PC-3 (cell line): ENCODE measurements at regions of chr14 and their contacts with region 1.

Region 1: DNA sequence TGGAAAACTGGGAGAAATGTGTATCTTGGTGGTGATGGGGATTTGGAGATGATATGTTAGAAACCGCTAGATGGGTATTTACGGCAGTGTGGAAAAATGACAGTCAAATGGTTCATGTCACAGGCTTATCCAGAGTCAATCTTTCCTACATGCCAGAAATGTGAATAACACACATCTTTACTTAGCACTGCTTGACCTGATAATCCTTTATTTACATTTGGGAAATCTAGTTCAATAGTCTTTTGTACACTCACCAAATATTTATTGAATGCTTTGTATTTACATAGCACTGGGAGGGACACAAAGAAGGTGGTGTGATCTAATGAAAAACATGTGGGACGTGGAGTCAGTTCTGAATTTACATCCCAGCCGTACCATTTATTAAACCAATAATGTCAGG is 208.2 kb downstream of the DIO2 start:
- DNase-seq: peak; percentile 89
- ATAC-seq: peak; percentile 90
- H3K4me3 ChIP-seq: no peak overlapping the region; the same call in 1 of the 2 replicates
- H3K27ac ChIP-seq: peak overlapping the region; percentile 73
- H3K4me1 ChIP-seq: peaks cover 19% of the 10 kb centered on the region
- H3K27me3 ChIP-seq: no peaks in the 10 kb centered on the region
- CTCF ChIP-seq: no peak

Region 2: GRCh38 chr14:79971330-79971729 is 31.8 kb before region 1 on chr14:
- CTCF ChIA-PET with region 1: no interaction called
- POLR2A ChIA-PET with region 1: no interaction called
- intact Hi-C with region 1: loop called (anchors 1 kb)
- DNase-seq: peak; percentile 72
- ATAC-seq: peak; percentile 88
- H3K4me3 ChIP-seq: no peak overlapping the region
- H3K27ac ChIP-seq: peak overlapping the region; percentile 79
- H3K4me1 ChIP-seq: peaks cover 20% of the 10 kb centered on the region
- H3K27me3 ChIP-seq: no peaks in the 10 kb centered on the region
- CTCF ChIP-seq: no peak